A673 (cell line): ENCODE measurements at regions of chr20 and their contacts with region 1.

Region 1: GRCh38 chr20:16917636-16918035 is 169.5 kb downstream of the OTOR start:
- DNase-seq: peak; percentile 33
- H3K4me3 ChIP-seq: no peak overlapping the region
- H3K27ac ChIP-seq: no peak overlapping the region
- H3K4me1 ChIP-seq: peaks cover 6% of the 10 kb centered on the region
- H3K27me3 ChIP-seq: no peaks in the 10 kb centered on the region
- CTCF ChIP-seq: no peak

Region 2: GRCh38 chr20:16719421-16719820 is 198.2 kb before region 1 on chr20:
- CTCF ChIA-PET with region 1: no interaction called
- POLR2A ChIA-PET with region 1: no interaction called
- intact Hi-C with region 1: no loop called
- DNase-seq: no peak
- H3K4me3 ChIP-seq: no peak overlapping the region
- H3K27ac ChIP-seq: no peak overlapping the region
- H3K4me1 ChIP-seq: no peaks in the 10 kb centered on the region
- H3K27me3 ChIP-seq: peaks cover 70% of the 10 kb centered on the region
- CTCF ChIP-seq: no peak

Region 3: DNA sequence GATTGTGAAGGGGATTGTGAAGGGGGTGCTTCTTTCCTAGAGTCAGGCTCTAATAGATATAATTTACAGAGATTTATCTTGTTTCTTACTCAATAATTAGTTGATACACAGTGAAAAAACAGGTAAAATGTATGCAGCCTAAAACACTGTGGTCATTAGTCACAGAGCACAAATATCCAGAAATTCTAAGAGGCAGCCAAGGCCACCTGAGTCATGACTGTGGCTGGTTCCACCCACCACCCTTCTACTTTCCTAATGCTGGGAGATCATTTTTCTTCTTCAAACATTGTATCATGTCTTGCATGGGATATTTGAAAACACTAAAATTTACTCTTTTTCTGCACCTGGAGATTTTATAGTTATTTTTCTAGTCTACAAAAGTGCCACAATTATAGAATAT is 12.1 kb after region 1 on chr20:
- CTCF ChIA-PET with region 1: no interaction called
- POLR2A ChIA-PET with region 1: no interaction called
- intact Hi-C with region 1: no loop called
- DNase-seq: no peak
- H3K4me3 ChIP-seq: no peak overlapping the region
- H3K27ac ChIP-seq: no peak overlapping the region
- H3K4me1 ChIP-seq: no peaks in the 10 kb centered on the region
- H3K27me3 ChIP-seq: no peaks in the 10 kb centered on the region
- CTCF ChIP-seq: no peak

Region 4: DNA sequence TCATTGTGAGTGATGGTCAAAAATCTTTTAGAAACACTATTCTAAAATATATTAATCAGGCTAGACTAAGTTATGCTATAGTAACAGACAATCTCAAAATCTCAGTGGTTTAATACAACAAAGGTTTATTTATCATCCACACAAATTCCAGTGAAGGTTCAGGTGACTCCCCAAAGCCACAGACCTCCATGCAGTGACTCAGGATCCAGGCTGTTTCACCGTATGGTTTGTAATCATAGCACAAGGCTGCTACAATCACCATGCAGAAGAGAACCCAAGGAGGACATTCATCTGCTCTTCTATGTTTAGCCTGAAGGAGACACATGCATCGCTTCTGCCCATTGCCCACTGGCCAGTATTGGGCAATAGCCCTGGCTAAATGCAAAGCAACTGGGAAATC is 567.4 kb after region 1 on chr20:
- CTCF ChIA-PET with region 1: interaction called, 14 read pairs
- POLR2A ChIA-PET with region 1: no interaction called
- intact Hi-C with region 1: no loop called
- DNase-seq: no peak
- H3K4me3 ChIP-seq: no peak overlapping the region
- H3K27ac ChIP-seq: no peak overlapping the region
- H3K4me1 ChIP-seq: no peaks in the 10 kb centered on the region
- H3K27me3 ChIP-seq: no peaks in the 10 kb centered on the region
- CTCF ChIP-seq: no peak